Caco-2 (cell line): ENCODE measurements at regions of chrX and their contacts with region 1.

Region 1: DNA sequence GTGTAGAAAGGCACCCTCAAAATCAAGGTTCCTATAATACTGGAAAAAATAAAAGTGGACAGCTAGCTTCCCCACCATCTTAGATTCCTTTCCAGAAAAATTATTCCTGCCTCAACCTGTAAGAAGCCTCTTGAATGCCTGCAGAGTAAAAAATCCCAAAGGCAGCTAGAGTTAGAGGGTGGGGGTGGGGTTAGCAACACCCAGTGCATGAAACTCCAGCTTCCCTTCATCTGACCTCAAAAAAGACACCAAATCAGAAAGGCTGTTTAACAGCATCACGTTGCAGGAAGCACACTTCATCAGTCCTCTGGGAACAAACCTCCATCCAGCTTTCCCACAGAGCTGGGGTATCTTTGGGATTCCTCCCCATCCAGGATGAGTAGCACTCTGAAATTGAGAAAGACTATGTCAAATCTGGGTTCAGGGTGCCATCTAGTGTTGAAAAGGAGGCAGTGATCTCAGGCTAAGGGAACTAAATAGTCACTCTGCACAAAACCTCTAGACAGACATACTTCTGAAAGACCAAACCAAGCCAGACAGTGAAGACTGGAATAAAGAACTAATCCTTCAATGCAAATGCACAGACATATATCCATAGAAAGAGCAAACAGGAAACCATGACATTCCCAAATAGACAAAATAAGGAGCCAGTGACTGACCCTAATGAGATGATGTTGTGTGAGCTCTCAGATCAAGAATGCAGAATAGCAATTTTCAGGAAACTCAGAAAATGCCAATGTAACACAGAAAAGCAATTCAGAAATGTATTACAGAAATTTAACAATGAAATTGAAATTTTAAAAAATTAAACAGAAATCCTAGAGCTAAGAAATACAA is 97.9 kb downstream of the ARHGEF9 start:
- DNase-seq: peak; percentile 18 to 28
- H3K4me3 ChIP-seq: no peak overlapping the region
- H3K4me3 Mint-ChIP-seq: no peak overlapping the region
- H3K27ac Mint-ChIP-seq: no peak overlapping the region
- H3K4me1 ChIP-seq: no peaks in the 10 kb centered on the region
- H3K4me1 Mint-ChIP-seq: no peaks in the 10 kb centered on the region
- H3K27me3 ChIP-seq: no peaks in the 10 kb centered on the region
- H3K27me3 Mint-ChIP-seq: no peaks in the 10 kb centered on the region
- CTCF ChIP-seq: peak; percentile 47 to 56

Region 2: DNA sequence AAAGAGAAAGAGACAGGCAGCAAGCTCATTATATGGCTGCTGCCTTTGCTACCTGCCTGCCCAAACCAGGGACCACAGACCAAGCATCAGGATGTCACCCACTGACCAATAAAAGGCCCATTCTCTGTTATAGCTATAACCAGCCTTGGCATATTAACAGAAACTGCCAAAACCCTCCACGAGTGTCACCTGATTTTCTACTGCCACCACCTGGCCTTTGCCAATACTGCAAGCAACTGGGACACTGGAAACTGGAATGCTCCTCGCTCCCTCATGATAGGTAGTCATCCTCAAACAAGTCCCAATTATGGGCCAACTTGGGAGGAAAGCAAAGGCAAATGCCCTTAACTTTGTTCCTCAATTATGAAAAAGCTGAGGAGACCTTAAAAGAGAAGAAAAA is 412.0 kb before region 1 on chrX:
- CTCF ChIA-PET with region 1: no interaction called
- POLR2A ChIA-PET with region 1: no interaction called
- intact Hi-C with region 1: loop called (anchors 1 kb)
- DNase-seq: peak; percentile 28 to 49
- H3K4me3 ChIP-seq: no peak overlapping the region
- H3K4me3 Mint-ChIP-seq: no peak overlapping the region
- H3K27ac Mint-ChIP-seq: no peak overlapping the region
- H3K4me1 ChIP-seq: no peaks in the 10 kb centered on the region
- H3K4me1 Mint-ChIP-seq: no peaks in the 10 kb centered on the region
- H3K27me3 ChIP-seq: no peaks in the 10 kb centered on the region
- H3K27me3 Mint-ChIP-seq: no peaks in the 10 kb centered on the region
- CTCF ChIP-seq: peak; percentile 39 to 50

Region 3: GRCh38 chrX:64265246-64265645 is 578.1 kb after region 1 on chrX:
- CTCF ChIA-PET with region 1: no interaction called
- POLR2A ChIA-PET with region 1: no interaction called
- intact Hi-C with region 1: no loop called
- DNase-seq: peak; percentile 43 to 45
- H3K4me3 ChIP-seq: no peak overlapping the region
- H3K4me3 Mint-ChIP-seq: no peak overlapping the region
- H3K27ac Mint-ChIP-seq: no peak overlapping the region
- H3K4me1 ChIP-seq: peaks cover 8% of the 10 kb centered on the region; the same call in 1 of the 2 replicates
- H3K4me1 Mint-ChIP-seq: no peaks in the 10 kb centered on the region
- H3K27me3 ChIP-seq: no peaks in the 10 kb centered on the region
- H3K27me3 Mint-ChIP-seq: no peaks in the 10 kb centered on the region
- CTCF ChIP-seq: no peak